ENCODE measurements at regions of chr10 and their contacts with region 1.

Region 1: DNA sequence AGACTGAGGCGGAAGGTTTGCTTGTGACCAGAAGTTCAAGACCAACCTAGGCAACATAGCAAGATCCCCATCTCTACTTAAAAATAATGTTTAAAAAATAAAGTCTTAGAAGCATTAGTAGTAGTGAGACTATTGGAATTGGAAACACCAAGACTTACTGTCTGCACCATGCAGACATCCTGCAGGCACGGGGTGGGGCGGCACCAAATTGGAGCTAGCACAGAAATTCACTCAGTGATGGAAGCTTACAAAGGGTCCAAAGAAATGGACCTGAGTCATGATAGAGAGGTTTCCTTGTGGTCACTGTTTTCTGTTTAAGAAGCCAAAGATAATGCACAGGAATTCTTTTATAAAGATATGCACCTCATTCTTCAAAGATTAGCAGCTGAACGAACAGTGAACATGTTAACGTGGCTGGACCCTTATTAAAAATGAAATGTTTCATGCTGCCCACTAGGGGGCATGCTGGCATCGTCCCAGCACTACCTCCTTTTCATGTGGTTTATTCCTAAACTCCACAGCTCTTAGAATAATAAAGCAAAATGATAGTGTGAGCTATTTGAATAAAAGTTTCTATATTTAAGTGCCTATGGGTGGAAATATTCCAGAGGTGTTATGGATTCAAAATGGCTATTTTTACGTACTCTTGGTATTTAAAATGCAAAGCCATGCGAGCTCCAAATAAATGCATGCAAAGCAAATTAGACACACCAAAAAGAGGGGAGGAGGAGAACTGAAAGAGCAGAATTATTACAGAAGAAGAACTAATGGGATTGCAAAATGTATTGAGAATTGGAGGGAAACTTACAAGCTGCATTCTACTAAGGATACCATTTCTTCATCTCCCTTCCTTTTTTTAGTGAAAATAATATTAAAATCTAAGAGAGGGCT is 28.6 kb downstream of the PDSS1 start:
- DNase-seq: peak; percentile 71
- ATAC-seq: peak; percentile 56
- H3K4me3 Mint-ChIP-seq: no peak overlapping the region
- H3K27ac Mint-ChIP-seq: no peak overlapping the region
- H3K4me1 Mint-ChIP-seq: peaks cover 4% of the 10 kb centered on the region
- H3K27me3 Mint-ChIP-seq: no peaks in the 10 kb centered on the region

Region 2: GRCh38 chr10:26334932-26335573 is 391.0 kb before region 1 on chr10:
- CTCF ChIA-PET with region 1: interaction called, 15 read pairs
- POLR2A ChIA-PET with region 1: no interaction called
- intact Hi-C with region 1: loop called (anchors 1 to 10 kb)
- DNase-seq: peak; percentile 73
- ATAC-seq: peak; percentile 95
- H3K4me3 Mint-ChIP-seq: peak overlapping the region; percentile 60
- H3K27ac Mint-ChIP-seq: peak overlapping the region; percentile 68
- H3K4me1 Mint-ChIP-seq: peaks cover 10% of the 10 kb centered on the region
- H3K27me3 Mint-ChIP-seq: no peaks in the 10 kb centered on the region

Region 3: GRCh38 chr10:26714415-26715136 is 11.5 kb before region 1 on chr10:
- CTCF ChIA-PET with region 1: interaction called, 10 read pairs
- POLR2A ChIA-PET with region 1: no interaction called
- intact Hi-C with region 1: no loop called
- DNase-seq: no peak
- ATAC-seq: no peak
- H3K4me3 Mint-ChIP-seq: no peak overlapping the region
- H3K27ac Mint-ChIP-seq: no peak overlapping the region
- H3K4me1 Mint-ChIP-seq: no peaks in the 10 kb centered on the region
- H3K27me3 Mint-ChIP-seq: no peaks in the 10 kb centered on the region

Region 4: GRCh38 chr10:26799342-26799741 is 73.3 kb after region 1 on chr10:
- CTCF ChIA-PET with region 1: interaction called, 12 read pairs
- POLR2A ChIA-PET with region 1: no interaction called
- intact Hi-C with region 1: no loop called
- DNase-seq: peak; percentile 20
- ATAC-seq: no peak
- H3K4me3 Mint-ChIP-seq: no peak overlapping the region
- H3K27ac Mint-ChIP-seq: no peak overlapping the region
- H3K4me1 Mint-ChIP-seq: peaks cover 60% of the 10 kb centered on the region
- H3K27me3 Mint-ChIP-seq: no peaks in the 10 kb centered on the region

Region 5: GRCh38 chr10:26881600-26882331 is 155.7 kb after region 1 on chr10:
- CTCF ChIA-PET with region 1: interaction called, 115 read pairs
- POLR2A ChIA-PET with region 1: no interaction called
- intact Hi-C with region 1: loop called (anchors 1 kb)
- DNase-seq: no peak
- ATAC-seq: peak; percentile 95
- H3K4me3 Mint-ChIP-seq: no peak overlapping the region
- H3K27ac Mint-ChIP-seq: no peak overlapping the region
- H3K4me1 Mint-ChIP-seq: no peaks in the 10 kb centered on the region
- H3K27me3 Mint-ChIP-seq: peaks cover 8% of the 10 kb centered on the region

Region 6: GRCh38 chr10:26946102-26946811 is 220.2 kb after region 1 on chr10:
- CTCF ChIA-PET with region 1: no interaction called
- POLR2A ChIA-PET with region 1: no interaction called
- intact Hi-C with region 1: no loop called
- DNase-seq: no peak
- ATAC-seq: no peak
- H3K4me3 Mint-ChIP-seq: no peak overlapping the region
- H3K27ac Mint-ChIP-seq: no peak overlapping the region
- H3K4me1 Mint-ChIP-seq: no peaks in the 10 kb centered on the region
- H3K27me3 Mint-ChIP-seq: peaks cover 6% of the 10 kb centered on the region